ENCODE measurements at regions of chr5 and their contacts with region 1.

Region 1: GRCh38 chr5:120960510-120960909 is 496.4 kb downstream of the PRR16 start:
- DNase-seq: no peak
- H3K4me3 ChIP-seq: no peak overlapping the region
- H3K27ac ChIP-seq: no peak overlapping the region
- H3K4me1 ChIP-seq: no peaks in the 10 kb centered on the region
- H3K27me3 ChIP-seq: no peaks in the 10 kb centered on the region
- CTCF ChIP-seq: no peak

Region 2: DNA sequence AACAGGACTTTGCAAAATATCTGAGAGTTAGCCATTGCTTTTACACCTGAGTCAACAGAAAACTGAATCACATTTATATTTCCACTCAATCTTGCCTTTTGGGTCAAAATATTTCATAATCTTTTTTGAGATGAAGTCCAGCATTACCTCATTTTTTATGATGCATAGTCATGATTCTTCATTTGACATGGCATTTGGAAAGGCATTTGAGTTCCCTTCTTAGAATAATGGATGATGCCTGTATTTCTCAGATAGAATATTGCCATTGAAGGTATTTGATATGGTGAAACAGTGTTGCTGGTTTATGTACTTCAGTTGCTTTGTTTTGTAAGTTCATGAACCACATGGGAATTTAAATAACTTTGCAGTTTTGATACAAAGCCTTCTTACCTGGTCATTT is 316.0 kb before region 1 on chr5:
- CTCF ChIA-PET with region 1: no interaction called
- dilution Hi-C with region 1: no loop called
- in situ Hi-C with region 1: no loop called
- intact Hi-C with region 1: no loop called
- DNase-seq: no peak
- H3K4me3 ChIP-seq: no peak overlapping the region
- H3K27ac ChIP-seq: no peak overlapping the region
- H3K4me1 ChIP-seq: no peaks in the 10 kb centered on the region
- H3K27me3 ChIP-seq: no peaks in the 10 kb centered on the region
- CTCF ChIP-seq: no peak

Region 3: GRCh38 chr5:120999550-120999949 is 39.0 kb after region 1 on chr5:
- CTCF ChIA-PET with region 1: no interaction called
- dilution Hi-C with region 1: loop called (anchors 5 kb)
- in situ Hi-C with region 1: no loop called
- intact Hi-C with region 1: no loop called
- DNase-seq: no peak
- H3K4me3 ChIP-seq: no peak overlapping the region
- H3K27ac ChIP-seq: no peak overlapping the region
- H3K4me1 ChIP-seq: no peaks in the 10 kb centered on the region
- H3K27me3 ChIP-seq: no peaks in the 10 kb centered on the region
- CTCF ChIP-seq: no peak

Region 4: GRCh38 chr5:121031491-121031890 is 71.0 kb after region 1 on chr5:
- CTCF ChIA-PET with region 1: no interaction called
- dilution Hi-C with region 1: loop called (anchors 5 kb)
- in situ Hi-C with region 1: no loop called
- intact Hi-C with region 1: no loop called
- DNase-seq: no peak
- H3K4me3 ChIP-seq: no peak overlapping the region
- H3K27ac ChIP-seq: no peak overlapping the region
- H3K4me1 ChIP-seq: no peaks in the 10 kb centered on the region
- H3K27me3 ChIP-seq: no peaks in the 10 kb centered on the region
- CTCF ChIP-seq: no peak